AG04449 (cell line): ENCODE measurements at regions of chr16 and their contacts with region 1.

Region 1: DNA sequence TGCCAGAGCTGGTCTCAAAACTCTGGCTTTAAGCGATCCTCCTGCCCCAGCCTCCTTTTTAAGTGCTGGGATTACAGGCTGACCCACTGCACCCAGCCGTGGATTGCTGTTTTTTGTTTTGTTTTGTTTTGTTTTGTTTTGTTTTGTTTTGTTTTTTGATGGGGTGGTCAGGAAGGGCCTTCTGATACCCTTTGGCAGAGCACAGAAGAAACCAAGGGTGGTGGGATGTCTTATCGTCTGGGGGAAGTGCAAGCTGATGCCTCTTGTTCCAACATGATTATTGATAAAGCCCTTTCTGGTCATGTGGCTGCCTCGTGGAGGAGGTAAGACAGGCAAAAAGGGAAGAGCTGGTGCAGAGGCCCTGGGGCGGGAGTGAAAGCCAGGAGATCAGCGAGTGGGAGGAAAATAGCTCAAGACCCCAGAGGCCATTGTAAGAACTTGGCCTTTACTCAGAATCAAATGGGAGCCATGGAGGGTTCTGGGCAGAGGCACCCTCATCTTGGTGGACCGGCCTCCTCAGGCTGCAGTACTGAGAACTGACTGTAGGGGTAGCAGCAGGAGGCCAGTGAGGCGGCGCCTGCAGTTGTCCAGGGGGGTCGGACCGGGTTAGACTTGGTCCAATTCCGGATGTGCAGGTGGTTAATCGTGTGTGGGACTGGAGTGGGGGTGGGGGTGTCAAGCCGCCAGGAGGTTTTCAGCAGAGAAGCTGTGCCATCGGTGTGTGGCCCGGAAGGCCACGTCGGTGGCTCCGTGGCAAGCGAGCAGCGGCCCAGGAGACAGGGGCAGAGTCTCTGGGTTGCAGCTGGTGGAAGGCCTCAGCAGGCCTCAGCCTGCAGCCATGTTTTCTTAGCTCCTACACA is 84.4 kb upstream of the GSE1 start:
- DNase-seq: no peak
- H3K4me3 ChIP-seq: no peak overlapping the region
- CTCF ChIP-seq: peak; percentile 29

Region 2: GRCh38 chr16:85514595-85515318 is 14.0 kb before region 1 on chr16:
- CTCF ChIA-PET with region 1: interaction called, 18 read pairs
- POLR2A ChIA-PET with region 1: no interaction called
- DNase-seq: peak; percentile 73
- H3K4me3 ChIP-seq: peak overlapping the region; percentile 23
- CTCF ChIP-seq: no peak

Region 3: GRCh38 chr16:85541980-85542900 is 13.5 kb after region 1 on chr16:
- CTCF ChIA-PET with region 1: interaction called, 28 read pairs
- POLR2A ChIA-PET with region 1: no interaction called
- DNase-seq: no peak
- H3K4me3 ChIP-seq: no peak overlapping the region
- CTCF ChIP-seq: no peak